ENCODE measurements at regions of chr17 and their contacts with region 1.

Region 1: DNA sequence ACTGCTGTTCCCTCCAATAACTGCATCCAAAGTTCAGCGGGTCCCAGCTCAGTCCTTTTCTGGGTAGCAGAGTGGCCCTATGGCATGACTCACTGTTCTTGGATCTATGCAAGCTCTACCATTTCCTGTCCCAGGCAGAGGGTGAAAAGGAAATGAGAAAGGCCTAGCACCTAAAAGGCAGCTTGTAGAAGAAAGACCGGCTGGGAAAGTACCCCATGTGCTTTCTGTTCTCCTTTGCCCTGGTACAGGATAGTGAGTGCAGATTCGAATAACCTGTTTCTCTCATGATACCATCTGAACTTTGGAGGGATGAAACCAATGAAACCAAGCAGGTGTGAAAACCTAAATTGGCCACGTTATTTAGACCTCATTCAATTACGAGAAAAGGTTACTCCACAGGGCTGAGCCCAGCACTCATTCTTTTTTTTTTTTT is 12.7 kb upstream of the HASPIN start:
- DNase-seq: peak; percentile 89
- H3K4me3 Mint-ChIP-seq: no peak overlapping the region
- H3K27ac Mint-ChIP-seq: peak overlapping the region; percentile 87
- H3K4me1 Mint-ChIP-seq: peaks cover 46% of the 10 kb centered on the region
- H3K27me3 Mint-ChIP-seq: no peaks in the 10 kb centered on the region

Region 2: DNA sequence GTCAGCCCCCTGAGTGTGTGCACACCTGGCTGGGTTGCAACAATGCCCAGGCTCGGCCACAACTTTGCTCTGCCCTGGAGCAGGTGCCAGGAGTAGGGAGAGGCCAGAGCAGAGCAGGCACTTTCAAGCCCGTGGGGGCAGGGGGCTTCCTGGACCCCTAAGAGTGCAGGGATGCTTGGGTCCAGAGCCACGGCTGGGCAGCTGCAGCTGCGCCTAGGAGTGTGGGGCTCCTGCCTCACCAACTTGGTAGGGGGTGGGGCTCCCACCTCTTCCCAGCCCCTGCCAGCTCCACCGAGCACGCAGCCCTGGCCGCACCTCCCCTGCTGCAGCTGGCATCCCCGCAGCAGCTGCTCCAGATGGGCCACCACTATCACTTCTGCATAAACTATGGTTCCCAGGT is 332.6 kb before region 1 on chr17:
- CTCF ChIA-PET with region 1: no interaction called
- intact Hi-C with region 1: no loop called
- DNase-seq: no peak
- H3K4me3 Mint-ChIP-seq: no peak overlapping the region
- H3K27ac Mint-ChIP-seq: no peak overlapping the region
- H3K4me1 Mint-ChIP-seq: no peaks in the 10 kb centered on the region
- H3K27me3 Mint-ChIP-seq: peaks cover 6% of the 10 kb centered on the region

Region 3: GRCh38 chr17:3695723-3696411 is 15.1 kb before region 1 on chr17 and contains the start of gene P2RX5:
- CTCF ChIA-PET with region 1: interaction called, 4 read pairs
- intact Hi-C with region 1: loop called (anchors 1 kb)
- DNase-seq: peak; percentile 48
- H3K4me3 Mint-ChIP-seq: peak within 1 kb of the TSS; percentile 94
- H3K27ac Mint-ChIP-seq: peak within 1 kb of the TSS; percentile 88
- H3K4me1 Mint-ChIP-seq: peaks cover 20% of the 10 kb centered on the region
- H3K27me3 Mint-ChIP-seq: no peaks in the 10 kb centered on the region
- total RNA-seq, gene P2RX5: 45.2 to 47.4 TPM

Measured in activated naive CD4-positive, alpha-beta T cell treated with anti-CD3 and anti-CD28 coated beads for 36 hours (primary cell).